B cell (primary cell): ENCODE measurements at regions of chr2 and their contacts with region 1.

Region 1: DNA sequence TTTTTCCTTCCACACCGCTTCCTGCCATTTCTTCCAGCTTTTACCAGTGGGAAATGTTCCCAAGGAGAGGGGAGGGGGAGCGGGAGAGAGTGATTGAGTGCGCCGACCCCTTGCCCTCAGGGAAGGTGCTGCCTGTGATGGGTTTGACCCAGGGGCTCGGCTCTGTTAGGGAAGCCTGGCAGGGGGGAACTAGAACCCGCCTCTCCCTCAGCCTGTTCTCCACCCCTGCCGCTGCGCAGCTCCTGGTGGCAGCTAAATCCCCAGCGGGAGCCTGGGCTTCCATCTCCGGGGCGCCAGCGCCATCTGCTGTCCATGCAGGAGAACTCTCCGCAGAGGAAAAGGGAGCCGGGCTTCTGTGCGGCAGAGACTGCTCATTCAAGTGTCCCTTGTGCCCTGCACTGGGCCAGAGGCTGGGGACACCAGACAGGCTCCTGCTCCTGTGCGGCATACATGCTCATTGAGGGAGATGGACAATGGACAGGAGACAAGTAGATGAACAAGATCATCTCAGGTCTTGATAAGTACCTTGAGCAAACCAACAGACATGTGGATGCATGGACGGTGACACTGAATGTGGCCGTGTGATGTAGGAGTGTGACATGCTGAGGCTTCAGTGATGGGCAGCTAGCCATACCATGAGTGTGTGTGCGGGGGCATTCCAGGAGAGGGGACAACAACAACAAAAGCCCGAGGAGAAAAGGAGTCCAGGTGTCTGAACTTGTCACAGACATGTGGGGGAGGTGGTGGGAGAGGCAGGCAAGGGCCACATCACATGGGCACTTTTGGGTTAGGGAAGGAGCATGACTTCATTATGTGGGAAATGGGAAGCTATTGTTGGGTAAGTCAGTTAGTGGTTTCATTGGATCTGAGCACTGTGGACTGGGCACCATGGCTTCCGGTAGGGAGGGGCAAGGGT is 13.3 kb downstream of the CHPF start:
- DNase-seq: peak; percentile 84
- ATAC-seq: peak; percentile 91
- H3K4me3 ChIP-seq: no peak overlapping the region
- H3K4me3 Mint-ChIP-seq: no peak overlapping the region
- H3K27ac ChIP-seq: no peak overlapping the region
- H3K27ac Mint-ChIP-seq: no peak overlapping the region
- H3K4me1 ChIP-seq: peaks cover 4 to 5% of the 10 kb centered on the region in 2 donors
- H3K4me1 Mint-ChIP-seq: peaks cover 3% of the 10 kb centered on the region
- H3K27me3 ChIP-seq: peaks cover 0 to 53% (median 18%) of the 10 kb centered on the region in 4 experiments
- H3K27me3 Mint-ChIP-seq: peaks cover 64% of the 10 kb centered on the region
- CTCF ChIP-seq: peak; percentile 98

Region 2: GRCh38 chr2:219402665-219403515 is 127.4 kb before region 1 on chr2:
- CTCF ChIA-PET with region 1: interaction called, 97 read pairs
- POLR2A ChIA-PET with region 1: no interaction called
- intact Hi-C with region 1: loop called (anchors 1 kb)
- DNase-seq: peak; percentile 71
- ATAC-seq: peak; percentile 84
- H3K4me3 ChIP-seq: no peak overlapping the region
- H3K4me3 Mint-ChIP-seq: no peak overlapping the region
- H3K27ac ChIP-seq: no peak overlapping the region
- H3K27ac Mint-ChIP-seq: no peak overlapping the region
- H3K4me1 ChIP-seq: no peaks in the 10 kb centered on the region
- H3K4me1 Mint-ChIP-seq: no peaks in the 10 kb centered on the region
- H3K27me3 ChIP-seq: peaks cover 0 to 25% (median 0%) of the 10 kb centered on the region in 4 experiments
- H3K27me3 Mint-ChIP-seq: peaks cover 28% of the 10 kb centered on the region
- CTCF ChIP-seq: peak; percentile 93

Region 3: GRCh38 chr2:219470429-219470828 is 59.9 kb before region 1 on chr2:
- CTCF ChIA-PET with region 1: interaction called, 146 read pairs
- POLR2A ChIA-PET with region 1: no interaction called
- intact Hi-C with region 1: no loop called
- DNase-seq: no peak
- ATAC-seq: no peak
- H3K4me3 ChIP-seq: no peak overlapping the region
- H3K4me3 Mint-ChIP-seq: no peak overlapping the region
- H3K27ac ChIP-seq: no peak overlapping the region
- H3K27ac Mint-ChIP-seq: no peak overlapping the region
- H3K4me1 ChIP-seq: no peaks in the 10 kb centered on the region
- H3K4me1 Mint-ChIP-seq: no peaks in the 10 kb centered on the region
- H3K27me3 ChIP-seq: peaks cover 0 to 4% (median 2%) of the 10 kb centered on the region in 4 experiments
- H3K27me3 Mint-ChIP-seq: peaks cover 29% of the 10 kb centered on the region
- CTCF ChIP-seq: no peak

Region 4: GRCh38 chr2:219498280-219499057 is 31.8 kb before region 1 on chr2 and contains the start of gene GMPPA:
- CTCF ChIA-PET with region 1: interaction called, 123 read pairs
- POLR2A ChIA-PET with region 1: no interaction called
- intact Hi-C with region 1: loop called (anchors 1 kb)
- DNase-seq: peak; percentile 94
- ATAC-seq: peak; percentile 96
- H3K4me3 ChIP-seq: peak within 1 kb of the TSS; percentile 65 to 90 (median 79)
- H3K4me3 Mint-ChIP-seq: peak within 1 kb of the TSS; percentile 93
- H3K27ac ChIP-seq: peak within 1 kb of the TSS in 1 of 2 donors; percentile 84
- H3K27ac Mint-ChIP-seq: peak within 1 kb of the TSS; percentile 87
- H3K4me1 ChIP-seq: peaks cover 38% of the 10 kb centered on the region in 2 donors
- H3K4me1 Mint-ChIP-seq: peaks cover 32% of the 10 kb centered on the region
- H3K27me3 ChIP-seq: peaks cover 0 to 46% (median 23%) of the 10 kb centered on the region in 4 experiments
- H3K27me3 Mint-ChIP-seq: peaks cover 33% of the 10 kb centered on the region
- CTCF ChIP-seq: no peak
- total RNA-seq, gene GMPPA: 27.8 and 32.0 TPM in 2 replicates

Region 5: GRCh38 chr2:219543601-219544358 is 13.5 kb after region 1 on chr2 and contains the starts of genes CHPF and TMEM198:
- CTCF ChIA-PET with region 1: interaction called, 29 read pairs
- POLR2A ChIA-PET with region 1: no interaction called
- intact Hi-C with region 1: no loop called
- DNase-seq: peak; percentile 93
- ATAC-seq: peak; percentile 80
- H3K4me3 ChIP-seq: peak within 1 kb of the TSS in 4 of 5 experiments; percentile 63 to 78 (median 67)
- H3K4me3 Mint-ChIP-seq: peak within 1 kb of the TSS; percentile 83
- H3K27ac ChIP-seq: peak within 1 kb of the TSS in 1 of 2 donors; percentile 35
- H3K27ac Mint-ChIP-seq: peak within 1 kb of the TSS; percentile 50
- H3K4me1 ChIP-seq: peaks cover 29 to 31% of the 10 kb centered on the region in 2 donors
- H3K4me1 Mint-ChIP-seq: peaks cover 24% of the 10 kb centered on the region
- H3K27me3 ChIP-seq: peaks cover 0 to 82% (median 21%) of the 10 kb centered on the region in 4 experiments
- H3K27me3 Mint-ChIP-seq: peaks cover 40% of the 10 kb centered on the region
- CTCF ChIP-seq: no peak
- total RNA-seq, gene CHPF: 1.2 and 1.3 TPM in 2 replicates
- total RNA-seq, gene TMEM198: 0.39 TPM in 1 of 2 replicates, not detected in the other